ENCODE measurements at regions of chr22 and their contacts with region 1.

Region 1: GRCh38 chr22:30754971-30755756 is 60.5 kb downstream of the OSBP2 start:
- DNase-seq: peak; percentile 60 to 69
- H3K4me3 ChIP-seq: no peak overlapping the region
- H3K27ac ChIP-seq: no peak overlapping the region
- H3K4me1 ChIP-seq: no peaks in the 10 kb centered on the region
- H3K27me3 ChIP-seq: no peaks in the 10 kb centered on the region
- CTCF ChIP-seq: peak; percentile 87

Region 2: GRCh38 chr22:30444632-30445437 is 310.3 kb before region 1 on chr22:
- CTCF ChIA-PET with region 1: interaction called, 3 read pairs
- POLR2A ChIA-PET with region 1: no interaction called
- intact Hi-C with region 1: loop called (anchors 1 kb)
- DNase-seq: peak in 1 of 2 experiments; percentile 53
- H3K4me3 ChIP-seq: no peak overlapping the region
- H3K27ac ChIP-seq: no peak overlapping the region
- H3K4me1 ChIP-seq: peaks cover 9% of the 10 kb centered on the region
- H3K27me3 ChIP-seq: no peaks in the 10 kb centered on the region
- CTCF ChIP-seq: peak; percentile 91

Region 3: GRCh38 chr22:30556388-30556787 is 198.8 kb before region 1 on chr22:
- CTCF ChIA-PET with region 1: no interaction called
- POLR2A ChIA-PET with region 1: no interaction called
- intact Hi-C with region 1: loop called (anchors 2 kb)
- DNase-seq: no peak
- H3K4me3 ChIP-seq: no peak overlapping the region
- H3K27ac ChIP-seq: no peak overlapping the region
- H3K4me1 ChIP-seq: peaks cover 6% of the 10 kb centered on the region
- H3K27me3 ChIP-seq: no peaks in the 10 kb centered on the region
- CTCF ChIP-seq: no peak; the same call in 1 of the 2 replicates

Region 4: DNA sequence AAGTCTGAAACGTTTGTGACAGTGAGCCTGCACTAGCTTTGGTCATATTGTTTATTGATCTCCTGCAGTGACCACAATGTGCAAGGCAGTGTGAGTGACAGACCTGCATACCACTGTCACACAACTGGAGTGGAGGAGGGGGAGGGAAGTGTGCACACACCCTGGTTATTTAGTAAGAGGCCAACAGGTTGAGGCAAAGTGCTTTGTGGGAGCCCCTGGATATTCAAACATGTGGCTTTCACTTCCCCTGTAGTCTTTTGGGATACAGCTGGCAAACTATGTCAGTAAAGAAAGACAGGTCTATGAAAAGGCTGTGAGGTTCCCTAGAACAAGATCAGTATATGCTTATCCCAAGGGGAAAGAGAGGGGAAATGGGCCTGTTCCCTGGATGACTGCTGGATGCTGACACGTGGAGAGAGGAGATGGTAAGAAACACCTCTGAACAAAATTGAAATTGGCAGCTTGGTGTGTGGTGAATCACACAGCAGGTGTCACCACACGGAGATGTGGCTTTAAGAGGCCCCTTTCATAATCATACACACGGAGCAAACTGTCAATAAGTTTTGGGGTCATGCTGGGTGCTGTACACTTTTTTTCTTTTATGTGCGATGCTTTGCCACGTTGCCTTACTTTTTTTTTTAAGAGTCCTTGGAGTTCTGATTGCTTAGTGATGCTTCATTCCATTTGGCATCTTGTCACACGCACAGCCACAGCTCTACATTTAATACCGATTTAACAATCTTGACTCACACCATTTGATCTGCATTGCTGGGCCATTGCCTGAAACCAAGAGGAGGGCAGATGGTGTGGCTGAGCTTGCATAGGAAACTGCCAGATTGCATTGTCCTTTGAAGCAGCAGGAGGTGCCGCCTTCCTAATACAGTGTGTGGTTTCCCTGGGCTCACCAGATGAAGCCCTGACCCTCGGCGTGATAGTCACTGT is 49.2 kb before region 1 on chr22:
- CTCF ChIA-PET with region 1: interaction called, 12 read pairs
- POLR2A ChIA-PET with region 1: no interaction called
- intact Hi-C with region 1: no loop called
- DNase-seq: no peak
- H3K4me3 ChIP-seq: no peak overlapping the region
- H3K27ac ChIP-seq: no peak overlapping the region
- H3K4me1 ChIP-seq: peaks cover 13% of the 10 kb centered on the region
- H3K27me3 ChIP-seq: no peaks in the 10 kb centered on the region
- CTCF ChIP-seq: no peak